A673 (cell line): ENCODE measurements at regions of chr19 and their contacts with region 1.

Region 1: DNA sequence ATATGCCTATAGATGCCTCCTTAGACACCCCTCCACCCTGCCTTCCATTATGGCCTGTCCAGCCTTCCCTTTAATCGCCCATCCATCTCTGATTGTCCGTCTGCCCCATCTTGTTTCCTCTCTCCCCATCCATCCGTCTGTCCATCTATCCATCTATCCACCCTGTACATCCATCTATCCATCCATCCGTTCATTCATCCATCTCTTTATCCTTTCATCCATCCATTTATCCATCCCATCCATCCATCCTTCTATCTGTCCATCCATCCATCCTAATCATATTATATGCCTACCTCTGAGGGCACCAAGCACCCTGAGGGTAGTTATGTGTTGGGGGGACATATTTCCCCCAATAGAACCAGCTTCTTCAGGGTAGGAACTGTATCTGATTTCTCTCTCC is 23.1 kb downstream of the TRPM4 start:
- DNase-seq: no peak
- H3K4me3 ChIP-seq: no peak overlapping the region
- H3K27ac ChIP-seq: no peak overlapping the region
- H3K4me1 ChIP-seq: peaks cover 5% of the 10 kb centered on the region
- H3K27me3 ChIP-seq: no peaks in the 10 kb centered on the region
- CTCF ChIP-seq: no peak

Region 2: GRCh38 chr19:48946463-48947257 is 234.0 kb before region 1 on chr19:
- CTCF ChIA-PET with region 1: interaction called, 11 read pairs
- POLR2A ChIA-PET with region 1: no interaction called
- intact Hi-C with region 1: no loop called
- DNase-seq: no peak
- H3K4me3 ChIP-seq: no peak overlapping the region
- H3K27ac ChIP-seq: no peak overlapping the region
- H3K4me1 ChIP-seq: no peaks in the 10 kb centered on the region
- H3K27me3 ChIP-seq: no peaks in the 10 kb centered on the region
- CTCF ChIP-seq: no peak

Region 3: DNA sequence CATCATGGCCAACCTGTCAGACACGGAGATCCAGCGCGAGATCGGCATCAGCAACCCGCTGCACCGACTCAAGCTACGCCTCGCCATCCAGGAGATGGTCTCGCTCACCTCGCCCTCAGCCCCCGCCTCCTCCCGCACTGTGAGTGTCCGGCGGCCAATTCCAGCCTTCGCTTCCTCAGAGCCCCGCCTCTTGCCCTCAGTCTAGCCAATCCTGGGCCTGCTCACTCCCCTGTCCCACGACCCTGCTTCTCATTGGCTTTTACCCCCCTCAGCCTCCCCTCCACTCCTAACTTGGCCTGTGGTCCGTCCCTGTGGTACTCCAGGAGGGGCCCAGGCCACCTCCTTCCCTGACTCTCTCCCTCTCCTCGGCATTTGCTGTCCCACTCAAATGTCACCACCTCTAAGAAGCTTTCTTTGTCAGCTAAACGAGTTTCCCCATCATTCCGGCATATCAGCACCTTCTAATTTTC is 37.8 kb before region 1 on chr19:
- CTCF ChIA-PET with region 1: interaction called, 10 read pairs
- POLR2A ChIA-PET with region 1: no interaction called
- intact Hi-C with region 1: no loop called
- DNase-seq: peak; percentile 94
- H3K4me3 ChIP-seq: peak overlapping the region; percentile 49
- H3K27ac ChIP-seq: peak overlapping the region; percentile 37
- H3K4me1 ChIP-seq: peaks cover 16% of the 10 kb centered on the region
- H3K27me3 ChIP-seq: no peaks in the 10 kb centered on the region
- CTCF ChIP-seq: no peak

Region 4: DNA sequence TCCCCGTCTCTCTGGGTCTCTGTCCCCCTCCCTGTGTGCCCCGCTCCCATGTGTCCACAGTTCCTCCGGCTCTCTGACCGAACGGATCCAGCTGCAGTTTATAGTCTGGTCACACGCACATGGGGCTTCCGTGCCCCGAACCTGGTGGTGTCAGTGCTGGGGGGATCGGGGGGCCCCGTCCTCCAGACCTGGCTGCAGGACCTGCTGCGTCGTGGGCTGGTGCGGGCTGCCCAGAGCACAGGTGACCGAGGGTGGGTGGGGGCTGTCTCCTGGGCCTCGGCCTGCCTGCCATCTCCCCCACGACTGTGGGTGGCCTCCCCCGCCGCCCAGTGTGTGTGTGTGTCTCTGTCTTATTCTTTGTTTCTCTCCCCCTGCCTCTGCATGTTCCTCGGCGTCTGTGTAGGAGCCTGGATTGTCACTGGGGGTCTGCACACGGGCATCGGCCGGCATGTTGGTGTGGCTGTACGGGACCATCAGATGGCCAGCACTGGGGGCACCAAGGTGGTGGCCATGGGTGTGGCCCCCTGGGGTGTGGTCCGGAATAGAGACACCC is 12.7 kb before region 1 on chr19:
- CTCF ChIA-PET with region 1: no interaction called
- POLR2A ChIA-PET with region 1: no interaction called
- intact Hi-C with region 1: no loop called
- DNase-seq: no peak
- H3K4me3 ChIP-seq: no peak overlapping the region
- H3K27ac ChIP-seq: no peak overlapping the region
- H3K4me1 ChIP-seq: no peaks in the 10 kb centered on the region
- H3K27me3 ChIP-seq: no peaks in the 10 kb centered on the region
- CTCF ChIP-seq: no peak